ENCODE measurements at regions of chr4 and their contacts with region 1.

Region 1: DNA sequence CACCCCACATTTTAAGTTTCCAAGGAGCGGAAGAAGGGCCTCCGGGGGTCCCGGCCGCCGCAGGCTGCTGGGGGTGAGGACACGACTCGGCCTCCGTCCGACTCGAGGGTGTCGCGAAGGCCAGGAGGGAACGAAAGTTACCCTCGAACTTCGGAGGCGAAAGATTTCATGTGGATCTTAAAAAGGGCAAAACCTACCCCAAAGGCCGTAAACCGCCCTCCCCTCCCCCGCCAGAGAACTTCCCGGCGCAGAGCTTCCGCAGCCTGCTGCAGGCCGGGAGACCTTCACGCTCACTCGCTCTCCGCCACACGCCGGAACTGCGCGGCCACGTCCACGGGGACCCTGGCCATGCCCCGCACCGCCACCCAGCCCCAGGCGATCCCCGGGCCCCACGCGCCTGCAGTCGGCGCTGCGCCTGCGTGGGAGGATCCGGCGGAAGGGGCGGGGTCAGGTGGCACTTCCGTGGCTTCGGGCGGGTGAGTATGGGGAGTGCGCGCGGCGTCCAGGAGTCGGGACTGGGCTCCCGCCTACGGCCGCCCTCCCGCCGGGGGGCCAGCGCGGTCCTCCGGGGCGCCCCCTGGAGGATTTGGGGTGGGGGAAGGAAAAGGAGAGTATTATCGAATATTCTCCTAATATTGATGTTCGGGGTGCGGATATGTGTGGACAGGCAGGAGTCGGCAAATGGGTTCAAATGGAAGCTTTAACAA is at the start of gene MMAA:
- DNase-seq: peak; percentile 98
- H3K4me3 ChIP-seq: peak within 1 kb of the TSS; percentile 63 to 89 (median 74)
- H3K27ac ChIP-seq: peak within 1 kb of the TSS; percentile 87 to 96 (median 92)
- H3K4me1 ChIP-seq: peaks cover 11 to 39% (median 28%) of the 10 kb centered on the region in 4 donors
- H3K27me3 ChIP-seq: no peaks in the 10 kb centered on the region
- CTCF ChIP-seq: peak; percentile 62 to 69 (median 65)
- EP300 ChIP-seq: no peak
- POLR2A ChIP-seq: peak; percentile 94
- total RNA-seq, gene MMAA: 2.4 to 5.4 (median 4.1) TPM

Region 2: GRCh38 chr4:144174401-144175067 is 1444.6 kb before region 1 on chr4:
- intact Hi-C with region 1: loop called (anchors 10 kb)
- DNase-seq: no peak
- H3K4me3 ChIP-seq: no peak overlapping the region
- H3K27ac ChIP-seq: no peak overlapping the region
- H3K4me1 ChIP-seq: peaks cover 0 to 3% (median 0%) of the 10 kb centered on the region in 4 donors
- H3K27me3 ChIP-seq: no peaks in the 10 kb centered on the region
- CTCF ChIP-seq: peak; percentile 33 to 43 (median 42)
- EP300 ChIP-seq: no peak
- POLR2A ChIP-seq: no peak

Region 3: DNA sequence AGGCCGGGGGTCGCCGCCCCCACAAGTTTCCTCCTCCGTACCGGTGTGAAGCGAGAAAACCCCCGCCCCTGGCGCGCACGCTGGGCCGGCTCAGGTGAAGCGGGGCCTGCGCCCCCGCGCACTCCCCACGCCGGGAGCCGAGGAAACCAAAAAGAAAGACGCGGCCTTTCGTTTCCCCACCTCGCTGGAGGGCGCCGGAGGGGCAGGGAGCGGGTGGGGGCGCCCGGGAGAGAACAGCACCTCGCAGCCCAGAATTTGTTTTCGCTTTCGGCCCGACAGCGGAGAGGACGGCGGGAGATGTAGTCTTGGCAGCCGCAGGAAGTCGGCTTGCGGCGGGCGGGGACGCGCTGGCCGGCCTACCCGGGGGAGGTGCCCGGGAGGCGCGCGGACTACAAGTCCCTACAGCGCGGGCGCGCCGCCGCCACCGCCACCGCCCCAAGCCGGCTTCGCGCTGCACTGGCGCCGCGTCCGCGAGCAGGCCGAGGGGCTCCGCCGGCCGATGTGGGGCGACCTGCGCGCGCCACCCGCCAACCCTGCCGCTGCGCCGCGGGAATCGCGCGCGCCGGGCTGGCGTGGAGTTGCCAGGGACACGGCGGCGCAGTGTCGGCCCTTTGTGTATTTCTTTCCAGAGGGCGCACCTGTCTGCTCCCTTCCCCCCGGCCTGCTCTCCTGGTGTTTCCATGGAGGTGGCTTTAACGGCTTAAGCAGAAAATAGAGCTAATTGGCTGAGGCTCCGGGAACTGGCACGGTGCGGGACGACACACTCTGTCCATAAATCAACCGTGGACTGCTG is 438.6 kb before region 1 on chr4 and contains the start of gene OTUD4:
- intact Hi-C with region 1: loop called (anchors 5 kb)
- DNase-seq: peak; percentile 98
- H3K4me3 ChIP-seq: peak within 1 kb of the TSS; percentile 71 to 91 (median 86)
- H3K27ac ChIP-seq: peak within 1 kb of the TSS; percentile 96 to 98 (median 98)
- H3K4me1 ChIP-seq: peaks cover 21 to 43% (median 39%) of the 10 kb centered on the region in 4 donors
- H3K27me3 ChIP-seq: no peaks in the 10 kb centered on the region
- CTCF ChIP-seq: peak in 1 of 3 experiments; percentile 7
- EP300 ChIP-seq: no peak
- POLR2A ChIP-seq: peak; percentile 51
- total RNA-seq, gene OTUD4: 29.8 to 49.1 (median 38.3) TPM

Region 4: GRCh38 chr4:145773581-145774234 is 154.6 kb after region 1 on chr4:
- intact Hi-C with region 1: no loop called
- DNase-seq: peak; percentile 90
- H3K4me3 ChIP-seq: no peak overlapping the region
- H3K27ac ChIP-seq: peak overlapping the region; percentile 46 to 76 (median 57)
- H3K4me1 ChIP-seq: peaks cover 0 to 14% (median 9%) of the 10 kb centered on the region in 4 donors
- H3K27me3 ChIP-seq: no peaks in the 10 kb centered on the region
- CTCF ChIP-seq: no peak
- EP300 ChIP-seq: no peak
- POLR2A ChIP-seq: no peak

Region 5: GRCh38 chr4:145887241-145887991 is 268.3 kb after region 1 on chr4:
- intact Hi-C with region 1: loop called (anchors 5 kb)
- DNase-seq: no peak
- H3K4me3 ChIP-seq: no peak overlapping the region
- H3K27ac ChIP-seq: peak overlapping the region; percentile 39 to 70 (median 58)
- H3K4me1 ChIP-seq: peaks cover 24 to 30% (median 24%) of the 10 kb centered on the region in 4 donors
- H3K27me3 ChIP-seq: no peaks in the 10 kb centered on the region
- CTCF ChIP-seq: peak in 1 of 3 experiments; percentile 5
- EP300 ChIP-seq: no peak
- POLR2A ChIP-seq: no peak

Region 6: GRCh38 chr4:145936142-145936996 is 317.3 kb after region 1 on chr4:
- intact Hi-C with region 1: loop called (anchors 10 kb)
- DNase-seq: peak; percentile 92
- H3K4me3 ChIP-seq: peak overlapping the region; percentile 71 to 91 (median 84)
- H3K27ac ChIP-seq: peak overlapping the region; percentile 89 to 96 (median 96)
- H3K4me1 ChIP-seq: peaks cover 15 to 50% (median 35%) of the 10 kb centered on the region in 4 donors
- H3K27me3 ChIP-seq: no peaks in the 10 kb centered on the region
- CTCF ChIP-seq: peak in 1 of 3 experiments; percentile 30
- EP300 ChIP-seq: no peak
- POLR2A ChIP-seq: no peak